Activated CD4-positive, alpha-beta memory T cell treated with anti-CD3 and anti-CD28 coated beads for 36 hours (primary cell): ENCODE measurements at regions of chr5 and their contacts with region 1.

Region 1: DNA sequence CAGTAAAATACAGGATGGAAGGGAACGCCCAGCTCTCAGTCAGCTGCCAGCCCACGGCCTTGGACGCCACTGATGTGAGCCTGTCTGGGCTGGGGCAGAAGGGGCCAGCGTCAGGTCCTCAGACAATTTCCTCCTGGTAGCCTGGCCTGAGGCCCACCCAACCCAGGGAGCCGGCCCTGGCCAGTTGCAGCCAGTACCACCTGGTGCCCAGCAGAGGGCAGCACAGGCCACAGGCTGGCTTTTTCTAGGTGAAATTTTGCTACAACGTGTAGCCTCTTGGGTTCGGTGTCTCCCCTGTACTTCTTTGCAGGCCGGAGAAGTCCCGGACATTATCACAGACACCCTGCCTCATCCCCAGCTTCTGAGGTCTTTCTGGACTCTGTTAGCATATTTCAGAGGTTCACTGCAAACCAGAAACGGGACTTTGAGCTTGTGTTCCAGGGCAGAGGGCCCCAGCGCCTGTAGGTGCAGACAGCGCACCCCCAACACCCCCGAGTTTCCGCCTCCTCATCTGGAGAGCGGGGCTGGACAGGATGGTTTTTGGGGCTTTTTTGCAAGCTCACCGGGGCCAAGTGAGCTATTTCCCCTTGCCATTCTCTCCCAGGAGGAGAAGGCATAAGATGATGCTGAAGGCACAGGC is 45.9 kb upstream of the KCNMB1 start:
- DNase-seq: peak; percentile 74
- H3K4me3 Mint-ChIP-seq: no peak overlapping the region
- H3K27ac Mint-ChIP-seq: no peak overlapping the region
- H3K4me1 Mint-ChIP-seq: no peaks in the 10 kb centered on the region
- H3K27me3 Mint-ChIP-seq: peaks cover 3% of the 10 kb centered on the region

Region 2: GRCh38 chr5:170173235-170173634 is 261.9 kb before region 1 on chr5:
- CTCF ChIA-PET with region 1: no interaction called
- POLR2A ChIA-PET with region 1: no interaction called
- intact Hi-C with region 1: no loop called
- DNase-seq: no peak
- H3K4me3 Mint-ChIP-seq: no peak overlapping the region
- H3K27ac Mint-ChIP-seq: no peak overlapping the region
- H3K4me1 Mint-ChIP-seq: no peaks in the 10 kb centered on the region
- H3K27me3 Mint-ChIP-seq: no peaks in the 10 kb centered on the region

Region 3: GRCh38 chr5:170228762-170229435 is 206.2 kb before region 1 on chr5:
- CTCF ChIA-PET with region 1: no interaction called
- POLR2A ChIA-PET with region 1: no interaction called
- intact Hi-C with region 1: no loop called
- DNase-seq: no peak
- H3K4me3 Mint-ChIP-seq: no peak overlapping the region
- H3K27ac Mint-ChIP-seq: no peak overlapping the region
- H3K4me1 Mint-ChIP-seq: peaks cover 3% of the 10 kb centered on the region
- H3K27me3 Mint-ChIP-seq: no peaks in the 10 kb centered on the region

Region 4: GRCh38 chr5:170420780-170421412 is 14.2 kb before region 1 on chr5:
- CTCF ChIA-PET with region 1: interaction called, 24 read pairs
- POLR2A ChIA-PET with region 1: no interaction called
- intact Hi-C with region 1: no loop called
- DNase-seq: peak; percentile 52
- H3K4me3 Mint-ChIP-seq: no peak overlapping the region
- H3K27ac Mint-ChIP-seq: no peak overlapping the region
- H3K4me1 Mint-ChIP-seq: peaks cover 14% of the 10 kb centered on the region
- H3K27me3 Mint-ChIP-seq: no peaks in the 10 kb centered on the region

Region 5: GRCh38 chr5:170597109-170597751 is 162.1 kb after region 1 on chr5:
- CTCF ChIA-PET with region 1: interaction called, 15 read pairs
- POLR2A ChIA-PET with region 1: no interaction called
- intact Hi-C with region 1: no loop called
- DNase-seq: peak; percentile 77
- H3K4me3 Mint-ChIP-seq: no peak overlapping the region
- H3K27ac Mint-ChIP-seq: no peak overlapping the region
- H3K4me1 Mint-ChIP-seq: peaks cover 19% of the 10 kb centered on the region
- H3K27me3 Mint-ChIP-seq: peaks cover 57% of the 10 kb centered on the region

Region 6: GRCh38 chr5:170614720-170615119 is 179.6 kb after region 1 on chr5:
- CTCF ChIA-PET with region 1: interaction called, 145 read pairs
- POLR2A ChIA-PET with region 1: no interaction called
- intact Hi-C with region 1: no loop called
- DNase-seq: peak; percentile 48
- H3K4me3 Mint-ChIP-seq: no peak overlapping the region
- H3K27ac Mint-ChIP-seq: no peak overlapping the region
- H3K4me1 Mint-ChIP-seq: no peaks in the 10 kb centered on the region
- H3K27me3 Mint-ChIP-seq: peaks cover 11% of the 10 kb centered on the region

Region 7: DNA sequence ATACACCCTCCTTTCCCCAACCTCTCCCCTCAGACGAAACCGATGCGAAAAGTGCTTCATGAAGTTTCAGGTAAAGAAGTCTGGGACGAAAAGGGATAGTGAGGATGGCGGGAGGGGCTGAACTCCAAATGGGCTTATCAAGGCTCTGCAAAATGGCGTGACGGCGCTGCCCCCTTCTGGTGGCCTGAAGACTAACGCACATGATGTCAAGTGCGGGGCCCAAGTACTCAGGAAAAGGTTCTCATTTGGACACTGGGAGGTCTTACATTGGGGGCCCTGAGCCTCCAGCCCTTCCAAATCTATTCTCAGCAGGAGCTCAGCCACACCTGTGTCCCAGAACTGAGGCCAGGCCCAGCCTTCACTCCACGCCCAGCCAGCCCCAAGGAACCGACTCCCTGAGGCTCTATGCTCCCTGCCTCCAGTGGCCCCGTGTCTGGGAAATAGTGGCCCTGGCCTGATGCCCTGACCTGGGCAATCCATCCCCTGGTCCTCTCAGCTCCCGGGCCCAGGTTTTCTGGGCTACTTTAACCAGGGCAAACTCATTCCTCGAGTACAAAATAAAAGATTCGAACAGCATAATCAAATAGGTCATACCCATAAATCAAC is 188.6 kb after region 1 on chr5:
- CTCF ChIA-PET with region 1: interaction called, 145 read pairs
- POLR2A ChIA-PET with region 1: no interaction called
- intact Hi-C with region 1: loop called (anchors 1 kb)
- DNase-seq: peak; percentile 64
- H3K4me3 Mint-ChIP-seq: no peak overlapping the region
- H3K27ac Mint-ChIP-seq: no peak overlapping the region
- H3K4me1 Mint-ChIP-seq: no peaks in the 10 kb centered on the region
- H3K27me3 Mint-ChIP-seq: peaks cover 6% of the 10 kb centered on the region

Region 8: GRCh38 chr5:170633235-170634081 is 198.4 kb after region 1 on chr5:
- CTCF ChIA-PET with region 1: interaction called, 145 read pairs
- POLR2A ChIA-PET with region 1: no interaction called
- intact Hi-C with region 1: loop called (anchors 1 kb)
- DNase-seq: peak; percentile 20
- H3K4me3 Mint-ChIP-seq: peak overlapping the region; percentile 40
- H3K27ac Mint-ChIP-seq: no peak overlapping the region
- H3K4me1 Mint-ChIP-seq: peaks cover 18% of the 10 kb centered on the region
- H3K27me3 Mint-ChIP-seq: peaks cover 2% of the 10 kb centered on the region

Region 9: GRCh38 chr5:170638454-170639220 is 203.6 kb after region 1 on chr5:
- CTCF ChIA-PET with region 1: interaction called, 141 read pairs
- POLR2A ChIA-PET with region 1: no interaction called
- intact Hi-C with region 1: loop called (anchors 1 kb)
- DNase-seq: peak; percentile 77
- H3K4me3 Mint-ChIP-seq: no peak overlapping the region
- H3K27ac Mint-ChIP-seq: no peak overlapping the region
- H3K4me1 Mint-ChIP-seq: peaks cover 5% of the 10 kb centered on the region
- H3K27me3 Mint-ChIP-seq: peaks cover 4% of the 10 kb centered on the region

Region 10: GRCh38 chr5:170896779-170897178 is 461.7 kb after region 1 on chr5:
- CTCF ChIA-PET with region 1: no interaction called
- POLR2A ChIA-PET with region 1: no interaction called
- intact Hi-C with region 1: no loop called
- DNase-seq: no peak
- H3K4me3 Mint-ChIP-seq: no peak overlapping the region
- H3K27ac Mint-ChIP-seq: no peak overlapping the region
- H3K4me1 Mint-ChIP-seq: no peaks in the 10 kb centered on the region
- H3K27me3 Mint-ChIP-seq: no peaks in the 10 kb centered on the region